Cardiac septum (tissue), 1 donor: ENCODE measurements at regions of chr13 and their contacts with region 1.

Region 1: DNA sequence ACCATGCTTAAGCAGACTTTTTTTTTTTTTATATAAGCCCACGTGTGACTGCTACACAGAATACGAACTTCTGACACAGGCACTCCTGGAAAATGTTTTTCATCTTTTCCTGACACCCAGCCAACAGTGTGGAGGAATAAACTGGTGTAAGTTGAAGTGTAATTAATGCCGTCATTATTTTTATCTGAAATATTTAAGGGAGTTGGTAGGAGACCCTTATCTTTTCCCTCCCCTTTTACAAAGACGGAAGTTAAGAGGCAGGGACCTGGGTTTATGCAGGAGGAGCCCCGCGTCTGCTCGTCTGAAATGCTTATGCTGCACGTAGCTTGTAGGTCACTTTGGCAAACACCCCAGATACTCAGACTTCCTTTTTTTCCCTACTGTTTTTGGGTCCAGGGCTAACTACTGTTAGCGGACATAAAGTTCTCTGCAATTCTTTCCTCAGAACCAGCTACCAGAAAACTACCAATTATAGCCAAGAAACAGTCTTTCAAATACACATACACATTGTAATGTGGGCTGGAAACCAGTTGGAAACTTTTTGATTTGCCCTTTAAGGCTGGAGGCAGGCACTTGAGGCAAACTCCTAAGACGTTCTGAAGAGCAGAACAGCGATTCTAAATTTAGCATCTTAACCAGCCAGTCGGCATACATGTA is 50.8 kb downstream of the EFNB2 start:
- DNase-seq: no peak

Region 2: GRCh38 chr13:106277484-106278154 is 207.0 kb before region 1 on chr13:
- intact Hi-C with region 1: loop called (anchors 10 kb)
- DNase-seq: peak; percentile 80